ENCODE measurements at regions of chr19 and their contacts with region 1.

Region 1: DNA sequence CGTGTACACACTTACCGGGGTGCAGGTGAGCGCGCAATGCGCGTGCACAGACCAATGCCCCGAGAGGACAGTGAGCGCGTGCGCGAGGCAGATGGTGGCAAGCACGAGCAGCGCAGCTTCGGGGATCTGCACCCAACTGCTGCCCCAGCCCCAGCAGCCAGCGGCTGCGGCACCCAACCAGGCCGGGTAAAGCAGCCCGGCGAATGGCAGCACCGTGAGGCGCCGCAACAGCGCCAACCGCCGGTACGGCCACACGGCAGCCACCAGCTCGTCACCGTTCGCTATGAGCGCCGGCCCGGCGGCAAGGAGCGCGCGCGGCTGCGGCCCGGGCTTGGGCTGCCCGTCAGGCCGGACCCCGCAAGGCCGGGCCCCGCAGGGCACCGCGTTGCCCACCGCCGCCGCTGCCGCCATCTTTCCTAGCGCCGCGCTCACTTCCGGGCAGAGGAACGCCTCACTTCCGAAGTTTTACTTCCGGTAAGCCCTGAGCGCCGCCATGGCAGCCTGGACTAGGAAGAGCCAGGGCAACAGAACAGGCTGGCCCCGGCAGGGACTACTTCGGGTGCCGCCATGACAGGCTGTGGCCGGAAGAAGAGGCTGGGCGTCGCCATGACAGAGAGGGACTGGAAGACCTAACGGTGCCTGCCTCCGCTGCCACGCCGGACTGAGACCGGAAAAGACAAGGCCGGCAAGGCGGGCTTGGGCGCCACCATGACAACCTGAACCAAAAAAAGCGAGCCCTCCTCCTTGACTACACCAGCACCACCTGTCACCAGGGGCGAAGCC is at the start of gene ATP13A1:
- DNase-seq: peak; percentile 74 to 96 (median 82)
- ATAC-seq: peak; percentile 93
- H3K4me3 ChIP-seq: peak within 1 kb of the TSS; percentile 92
- H3K27ac ChIP-seq: peak within 1 kb of the TSS; percentile 100
- H3K4me1 ChIP-seq: peaks cover 10 to 41% of the 10 kb centered on the region in 2 experiments; a peak in 4 of 5 replicates
- H3K27me3 ChIP-seq: no peaks in the 10 kb centered on the region
- CTCF ChIP-seq: peak in 1 of 3 experiments; percentile 37; a peak in 1 of 6 replicates
- EP300 ChIP-seq: no peak
- POLR2A ChIP-seq: peak; percentile 91
- RAD21 ChIP-seq: no peak
- polyA plus RNA-seq, gene ATP13A1: 0.90 to 1.8 TPM

Region 2: DNA sequence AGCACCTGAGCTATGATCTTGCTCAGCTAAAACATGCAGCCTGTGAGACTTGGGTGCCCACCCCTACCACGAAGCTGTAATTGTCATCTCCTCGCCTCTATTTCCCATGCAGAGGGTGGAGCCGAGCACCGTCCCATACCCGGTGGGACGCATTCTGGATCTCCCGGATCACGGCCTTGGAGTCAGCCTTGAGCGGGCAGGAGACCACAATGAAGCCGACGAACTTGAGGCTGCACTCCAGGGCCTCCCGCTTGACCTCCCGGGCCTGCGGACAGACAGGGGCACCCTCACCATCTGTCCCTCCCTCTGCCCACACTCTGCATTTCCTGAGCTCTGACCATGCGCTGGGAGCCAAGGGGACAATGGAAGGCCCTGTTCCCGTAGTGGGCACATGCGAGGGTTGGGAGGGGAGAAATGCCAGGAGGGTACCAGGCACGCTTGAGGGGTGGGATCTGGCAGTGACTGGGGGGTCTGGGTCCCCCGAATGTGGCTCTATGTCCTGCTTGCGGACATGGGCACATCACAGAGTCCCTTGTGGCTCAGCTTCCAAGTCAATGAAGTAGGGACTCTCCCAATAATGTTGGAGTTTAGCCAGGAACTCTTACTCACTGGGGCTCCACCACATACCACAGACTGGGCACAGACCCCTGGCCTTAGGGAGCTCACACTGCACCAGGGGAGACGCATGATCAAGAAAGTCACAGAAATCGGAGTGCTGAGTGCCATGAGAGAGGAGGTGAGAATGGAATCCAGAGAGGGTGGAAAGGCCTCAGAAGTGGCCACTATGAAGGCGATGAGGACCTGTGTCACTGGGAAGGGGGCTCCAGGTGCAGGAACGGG is 10.8 kb before region 1 on chr19:
- CTCF ChIA-PET with region 1: no interaction called
- POLR2A ChIA-PET with region 1: interaction called, 40 read pairs
- in situ Hi-C with region 1: no loop called
- intact Hi-C with region 1: no loop called
- DNase-seq: no peak
- ATAC-seq: no peak
- H3K4me3 ChIP-seq: no peak overlapping the region
- H3K27ac ChIP-seq: no peak overlapping the region
- H3K4me1 ChIP-seq: peaks cover 0 to 4% of the 10 kb centered on the region in 2 experiments; a peak in 1 of 5 replicates
- H3K27me3 ChIP-seq: no peaks in the 10 kb centered on the region
- CTCF ChIP-seq: no peak
- EP300 ChIP-seq: no peak
- POLR2A ChIP-seq: no peak
- RAD21 ChIP-seq: no peak

Region 3: GRCh38 chr19:19732579-19733501 is 69.4 kb after region 1 on chr19 and contains the start of gene ZNF14:
- CTCF ChIA-PET with region 1: no interaction called
- POLR2A ChIA-PET with region 1: interaction called, 5 read pairs
- in situ Hi-C with region 1: no loop called
- intact Hi-C with region 1: loop called (anchors 10 kb)
- DNase-seq: peak; percentile 96 to 99 (median 99)
- ATAC-seq: peak; percentile 100
- H3K4me3 ChIP-seq: peak within 1 kb of the TSS; percentile 76
- H3K27ac ChIP-seq: peak within 1 kb of the TSS; percentile 67
- H3K4me1 ChIP-seq: peaks cover 5 to 14% of the 10 kb centered on the region in 2 experiments; a peak in 4 of 5 replicates
- H3K27me3 ChIP-seq: no peaks in the 10 kb centered on the region
- CTCF ChIP-seq: peak in 1 of 3 experiments; percentile 19; a peak in 2 of 6 replicates
- EP300 ChIP-seq: no peak
- POLR2A ChIP-seq: peak; percentile 88
- RAD21 ChIP-seq: no peak
- polyA plus RNA-seq, gene ZNF14: 2.6 to 7.0 TPM

Region 4: GRCh38 chr19:19805480-19805879 is 142.0 kb after region 1 on chr19:
- CTCF ChIA-PET with region 1: no interaction called
- POLR2A ChIA-PET with region 1: no interaction called
- in situ Hi-C with region 1: no loop called
- intact Hi-C with region 1: no loop called
- DNase-seq: no peak
- ATAC-seq: no peak
- H3K4me3 ChIP-seq: no peak overlapping the region
- H3K27ac ChIP-seq: no peak overlapping the region
- H3K4me1 ChIP-seq: no peaks in the 10 kb centered on the region
- H3K27me3 ChIP-seq: no peaks in the 10 kb centered on the region
- CTCF ChIP-seq: no peak
- EP300 ChIP-seq: no peak
- POLR2A ChIP-seq: no peak
- RAD21 ChIP-seq: no peak

Measured in K562 (cell line).